GM10248 (cell line): ENCODE measurements at regions of chr2 and their contacts with region 1.

Region 1: DNA sequence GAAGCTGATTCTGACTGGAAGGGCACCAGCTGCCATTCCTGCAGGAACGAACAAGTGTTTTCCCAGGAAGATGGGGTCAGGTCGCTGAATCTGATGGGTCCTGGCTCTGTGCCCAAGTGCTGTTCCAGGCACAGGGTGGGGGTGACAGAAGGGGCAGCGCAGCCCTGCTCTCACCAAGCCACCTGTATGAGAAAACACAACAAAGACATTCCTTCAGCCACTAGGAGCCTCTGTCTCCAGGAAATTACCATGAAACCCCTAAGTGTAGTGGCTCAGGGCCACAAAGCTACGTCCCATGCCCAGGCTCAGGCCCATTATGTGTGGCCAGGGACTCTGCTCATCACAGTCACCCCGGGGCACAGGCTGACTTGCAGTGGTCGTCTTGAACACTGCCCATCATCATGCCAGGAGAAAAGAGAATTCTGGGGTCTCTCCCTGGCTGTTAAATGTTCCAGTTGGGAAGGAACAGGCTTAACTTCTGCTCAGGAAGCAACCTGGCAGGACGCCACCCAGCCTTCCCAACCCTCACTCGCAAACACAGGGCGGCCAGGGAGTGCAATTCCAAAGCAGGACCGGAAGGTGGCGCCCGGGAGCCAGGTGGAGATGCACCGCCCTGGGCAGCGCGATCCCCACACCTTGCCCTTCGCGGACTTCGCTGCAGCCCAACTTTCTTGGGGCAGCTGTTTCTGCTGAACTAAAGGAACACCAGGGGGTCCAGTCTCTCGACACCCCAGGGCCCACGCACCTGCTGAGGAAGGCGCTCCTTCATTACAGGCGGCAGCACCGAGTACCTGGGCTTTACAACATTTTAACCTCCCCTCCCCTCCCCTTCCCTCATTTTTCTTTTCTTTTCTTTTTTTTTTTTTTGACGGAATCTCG is 11.0 kb upstream of the SFTPB start:
- DNase-seq: peak; percentile 91
- CTCF ChIP-seq: peak; percentile 99

Region 2: GRCh38 chr2:85655961-85656417 is 23.0 kb before region 1 on chr2:
- CTCF ChIA-PET with region 1: interaction called, 28 read pairs
- POLR2A ChIA-PET with region 1: no interaction called
- DNase-seq: no peak
- CTCF ChIP-seq: no peak

Region 3: GRCh38 chr2:85662899-85663593 is 16.0 kb before region 1 on chr2:
- CTCF ChIA-PET with region 1: interaction called, 28 read pairs
- POLR2A ChIA-PET with region 1: no interaction called
- DNase-seq: no peak
- CTCF ChIP-seq: no peak

Region 4: DNA sequence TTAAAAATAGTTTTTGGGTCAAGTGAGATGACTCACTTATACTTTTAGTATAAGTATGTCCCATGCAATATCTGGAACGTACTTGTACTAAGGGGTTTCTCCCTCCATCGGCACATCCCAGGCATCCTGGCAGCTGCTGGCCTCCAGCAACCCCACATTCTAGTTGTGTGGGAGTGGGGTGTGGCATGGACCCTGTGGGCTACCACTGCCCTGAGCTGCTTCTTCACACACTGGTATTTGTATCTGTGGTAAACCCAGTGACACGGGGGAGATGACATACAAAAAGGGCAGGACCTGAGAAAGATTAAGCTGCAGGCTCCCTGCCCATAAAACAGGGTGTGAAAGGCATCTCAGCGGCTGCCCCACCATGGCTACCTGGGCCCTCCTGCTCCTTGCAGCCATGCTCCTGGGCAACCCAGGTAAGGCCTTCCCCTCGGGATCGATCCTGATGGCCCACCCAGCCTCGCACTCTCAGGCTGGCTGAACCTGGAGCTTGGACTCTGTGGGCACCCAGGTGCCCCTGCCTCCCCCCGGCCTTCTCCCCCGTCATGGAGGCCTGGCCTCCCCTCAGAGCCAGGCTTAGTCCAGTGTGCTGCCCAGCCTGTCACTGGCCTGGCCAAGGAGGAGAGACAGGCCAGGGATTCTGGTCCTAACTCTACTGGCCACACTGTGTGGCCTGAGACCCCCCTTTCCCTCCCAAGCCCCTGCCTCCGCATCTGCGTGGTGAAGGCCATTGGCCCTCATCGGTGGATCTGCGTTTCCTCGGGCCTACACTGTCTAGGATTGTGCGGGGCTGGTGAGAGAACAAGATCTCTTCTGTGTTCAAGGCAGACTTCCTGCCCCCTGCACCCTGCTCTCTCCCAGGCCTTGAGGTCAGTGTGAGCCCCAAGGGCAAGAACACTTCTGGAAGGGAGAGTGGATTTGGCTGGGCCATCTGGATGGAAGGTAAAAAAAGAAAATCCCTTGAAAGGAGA is 15.3 kb after region 1 on chr2 and contains the start of gene GNLY:
- CTCF ChIA-PET with region 1: interaction called, 14 read pairs
- POLR2A ChIA-PET with region 1: no interaction called
- DNase-seq: no peak
- CTCF ChIP-seq: no peak